Dorsolateral prefrontal cortex (tissue), 120 donors: ENCODE measurements at regions of chr7 and their contacts with region 1.

Region 1: DNA sequence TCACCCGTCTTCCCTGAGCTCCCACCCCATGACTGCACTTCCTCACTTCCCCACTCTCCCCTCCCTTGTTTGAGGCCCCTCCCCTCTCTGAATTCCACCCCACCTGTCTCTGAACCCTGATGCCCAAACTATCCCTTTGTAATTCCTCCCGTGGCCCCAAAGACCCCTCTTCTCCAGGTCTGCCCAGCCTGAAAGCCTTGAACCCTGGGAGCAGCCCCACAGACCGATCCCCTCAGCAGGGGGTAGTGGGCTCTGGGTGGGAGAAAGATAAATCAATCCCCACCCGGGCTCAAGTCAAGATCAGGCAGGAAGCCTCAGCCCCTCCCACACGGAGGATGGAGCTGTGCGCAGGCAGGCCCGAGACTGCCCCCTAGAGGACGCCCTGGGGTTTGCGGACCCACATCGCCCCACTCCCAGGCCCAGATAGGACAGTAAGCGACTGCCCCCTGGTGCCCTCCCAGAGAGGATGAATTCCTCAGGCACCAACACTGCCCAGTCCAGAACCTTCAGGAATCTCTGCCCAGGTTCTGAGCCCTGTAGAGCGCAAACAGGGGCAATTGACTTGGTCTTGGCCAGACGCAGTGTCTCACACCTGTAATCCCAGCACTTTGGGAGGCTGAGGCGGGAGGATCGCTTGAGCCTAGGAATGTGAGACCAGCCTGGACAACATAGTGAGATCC is 11.7 kb downstream of the HSPB1 start:
- DNase-seq: peak; percentile 93 to 97 (median 96)
- H3K4me3 ChIP-seq: peak overlapping the region in 2 of 59 donors; percentile 6 to 27
- H3K27ac ChIP-seq: peak overlapping the region in 24 of 59 donors; percentile 1 to 81 (median 41)
- H3K27me3 ChIP-seq: no peaks in the 10 kb centered on the region
- CTCF ChIP-seq: peak; percentile 79 to 100 (median 100)

Region 2: GRCh38 chr7:75899091-75899490 is 415.1 kb before region 1 on chr7:
- intact Hi-C with region 1: no loop called
- DNase-seq: no peak
- H3K4me3 ChIP-seq: no peak overlapping the region
- H3K27ac ChIP-seq: no peak overlapping the region
- H3K27me3 ChIP-seq: no peaks in the 10 kb centered on the region
- CTCF ChIP-seq: no peak

Region 3: DNA sequence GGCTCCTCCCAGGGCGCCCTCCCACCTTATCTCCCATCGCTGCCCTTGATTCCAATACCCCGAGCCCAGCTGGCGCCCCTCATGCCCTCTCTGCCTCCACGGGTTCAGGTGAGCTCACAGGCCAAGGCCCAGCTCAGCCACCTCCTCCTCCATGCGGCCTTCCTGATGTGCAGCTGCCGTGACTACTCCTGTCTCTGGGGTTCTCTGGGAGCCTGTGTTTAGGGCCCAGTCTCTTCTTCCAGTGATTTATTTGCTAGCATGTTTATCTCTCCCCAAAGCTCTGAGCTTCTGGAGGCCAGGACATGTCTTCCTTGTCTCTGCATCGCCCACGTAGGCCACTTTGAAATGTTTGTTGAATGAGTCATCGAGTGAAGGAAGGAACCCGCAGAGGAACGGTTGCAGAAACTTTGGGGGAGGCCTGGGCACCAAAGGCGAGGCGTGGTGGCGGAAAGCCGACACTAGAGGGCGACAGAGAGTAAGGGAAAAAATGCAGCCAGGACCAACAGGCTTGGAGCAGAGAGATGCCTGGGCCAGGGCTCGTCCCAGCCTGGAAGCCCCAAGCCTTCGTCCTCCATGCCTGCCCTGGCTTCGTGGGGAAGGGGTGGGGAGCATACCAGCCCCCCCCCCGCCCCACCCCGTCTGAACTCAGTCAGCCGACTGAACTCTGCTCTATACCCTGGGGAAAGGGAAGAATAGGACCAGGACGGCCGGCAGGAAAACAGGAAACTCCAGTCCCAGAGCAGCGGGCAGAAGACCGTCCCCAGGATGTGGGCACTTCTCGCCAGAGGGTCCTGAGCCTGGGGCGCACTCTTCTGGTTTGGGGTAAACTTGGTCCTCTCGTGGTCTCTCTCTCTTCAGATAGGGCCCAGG is 22.6 kb before region 1 on chr7:
- intact Hi-C with region 1: loop called (anchors 1 to 2 kb)
- DNase-seq: peak; percentile 86 to 92 (median 90)
- H3K4me3 ChIP-seq: peak overlapping the region; percentile 4 to 65 (median 46)
- H3K27ac ChIP-seq: peak overlapping the region; percentile 68 to 100 (median 100)
- H3K27me3 ChIP-seq: no peaks in the 10 kb centered on the region
- CTCF ChIP-seq: peak; percentile 35 to 100 (median 97)